CD4-positive, alpha-beta memory T cell (primary cell): ENCODE measurements at regions of chr2 and their contacts with region 1.

Region 1: DNA sequence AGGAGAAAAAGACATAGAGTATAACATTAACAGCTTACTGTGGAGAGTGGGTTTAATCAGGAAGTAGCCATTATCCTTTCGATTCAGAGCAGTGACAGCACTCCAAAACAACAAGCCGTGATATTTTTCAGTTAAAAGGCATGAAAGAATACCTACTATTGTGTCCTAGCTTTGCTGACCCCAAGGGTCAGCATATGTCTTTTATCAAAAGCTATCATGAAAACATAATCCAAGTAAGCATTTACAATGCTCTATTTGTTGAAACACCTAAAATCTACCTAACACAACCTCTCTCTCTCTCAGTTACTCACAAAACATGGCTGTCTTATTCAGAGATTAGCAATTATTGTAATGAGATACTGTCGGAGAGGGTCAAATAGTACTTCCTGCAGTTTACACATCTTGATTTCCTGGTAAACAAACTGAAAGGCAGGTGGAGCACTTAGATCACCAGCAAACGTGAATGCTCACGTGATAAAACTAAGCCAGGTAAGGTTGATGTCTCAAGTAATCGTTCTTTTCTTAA is 100.0 kb downstream of the BAZ2B start:
- DNase-seq: peak; percentile 64 to 80 (median 69)
- H3K4me3 ChIP-seq: peak overlapping the region; percentile 82 to 83
- H3K4me3 Mint-ChIP-seq: peak overlapping the region; percentile 71 to 89 (median 85)
- H3K27ac ChIP-seq: peak overlapping the region; percentile 58
- H3K27ac Mint-ChIP-seq: peak overlapping the region; percentile 48 to 95 (median 88)
- H3K4me1 ChIP-seq: peaks cover 33% of the 10 kb centered on the region
- H3K4me1 Mint-ChIP-seq: peaks cover 13 to 40% (median 23%) of the 10 kb centered on the region in 4 donors
- H3K27me3 ChIP-seq: no peaks in the 10 kb centered on the region
- H3K27me3 Mint-ChIP-seq: no peaks in the 10 kb centered on the region

Region 2: DNA sequence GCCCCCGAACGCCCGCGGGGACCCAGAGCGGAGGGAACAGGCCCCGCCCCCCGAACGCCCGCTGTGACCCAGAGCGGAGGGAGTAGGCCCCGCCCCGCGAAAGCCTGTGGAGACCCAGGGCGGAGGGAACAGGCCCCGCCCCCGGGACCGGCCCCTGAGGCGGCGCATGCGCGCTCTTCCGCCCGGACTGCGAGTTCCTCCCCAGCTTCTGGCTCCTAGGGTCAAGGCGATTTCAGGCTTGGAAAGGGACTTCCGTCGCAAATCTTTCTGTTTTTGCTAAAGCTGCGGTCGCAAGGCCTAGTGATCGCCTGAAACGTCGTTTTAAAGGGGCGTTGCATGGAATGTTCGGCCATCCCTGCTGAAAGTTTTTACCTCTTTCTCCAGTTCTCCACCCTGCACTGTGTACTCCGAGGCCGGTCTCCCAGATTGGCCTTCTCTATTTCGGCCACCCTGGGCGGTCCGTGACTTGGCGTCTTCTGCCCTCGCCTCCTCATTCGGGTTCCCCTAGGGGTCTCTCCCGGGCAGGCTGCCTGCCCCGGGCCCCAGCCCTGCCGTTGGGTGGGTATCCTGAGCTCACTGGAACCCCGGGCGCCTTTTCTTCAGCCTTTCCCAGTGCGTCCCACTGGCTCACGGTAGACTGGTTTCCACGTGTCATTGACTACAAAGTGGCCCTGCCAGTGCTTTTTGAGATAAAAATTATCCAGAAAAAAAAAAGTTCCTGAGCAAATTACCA is 229.4 kb before region 1 on chr2:
- CTCF ChIA-PET with region 1: no interaction called
- POLR2A ChIA-PET with region 1: no interaction called
- intact Hi-C with region 1: loop called (anchors 5 kb)
- DNase-seq: peak; percentile 94 to 95 (median 95)
- H3K4me3 ChIP-seq: peak overlapping the region; percentile 20 to 67
- H3K4me3 Mint-ChIP-seq: peak overlapping the region; percentile 85 to 92 (median 89)
- H3K27ac ChIP-seq: peak overlapping the region; percentile 64
- H3K27ac Mint-ChIP-seq: peak overlapping the region; percentile 61 to 93 (median 82)
- H3K4me1 ChIP-seq: peaks cover 13% of the 10 kb centered on the region
- H3K4me1 Mint-ChIP-seq: peaks cover 15 to 30% (median 23%) of the 10 kb centered on the region in 4 donors
- H3K27me3 ChIP-seq: no peaks in the 10 kb centered on the region
- H3K27me3 Mint-ChIP-seq: no peaks in the 10 kb centered on the region

Region 3: DNA sequence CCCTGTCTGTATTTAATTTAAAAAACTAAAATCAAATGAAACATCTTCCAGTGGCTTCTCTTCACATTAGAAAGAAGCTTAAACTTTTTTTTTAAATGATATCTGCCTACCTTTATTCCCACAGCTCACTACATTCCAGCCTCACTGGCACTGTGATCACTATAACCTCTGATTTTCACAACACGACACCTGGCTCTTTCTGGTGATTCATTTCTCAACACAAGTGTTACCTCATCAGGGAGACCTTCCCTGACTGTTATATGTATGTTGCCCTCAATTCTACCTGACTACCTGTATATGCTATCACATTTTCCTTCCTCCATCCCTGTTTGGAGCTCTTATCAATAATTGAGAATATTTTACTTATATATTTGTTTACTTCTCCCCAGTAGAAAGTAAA is 23.4 kb after region 1 on chr2:
- CTCF ChIA-PET with region 1: no interaction called
- POLR2A ChIA-PET with region 1: no interaction called
- intact Hi-C with region 1: no loop called
- DNase-seq: no peak
- H3K4me3 ChIP-seq: no peak overlapping the region
- H3K4me3 Mint-ChIP-seq: no peak overlapping the region
- H3K27ac ChIP-seq: no peak overlapping the region
- H3K27ac Mint-ChIP-seq: no peak overlapping the region
- H3K4me1 ChIP-seq: no peaks in the 10 kb centered on the region
- H3K4me1 Mint-ChIP-seq: no peaks in the 10 kb centered on the region
- H3K27me3 ChIP-seq: no peaks in the 10 kb centered on the region
- H3K27me3 Mint-ChIP-seq: no peaks in the 10 kb centered on the region

Region 4: DNA sequence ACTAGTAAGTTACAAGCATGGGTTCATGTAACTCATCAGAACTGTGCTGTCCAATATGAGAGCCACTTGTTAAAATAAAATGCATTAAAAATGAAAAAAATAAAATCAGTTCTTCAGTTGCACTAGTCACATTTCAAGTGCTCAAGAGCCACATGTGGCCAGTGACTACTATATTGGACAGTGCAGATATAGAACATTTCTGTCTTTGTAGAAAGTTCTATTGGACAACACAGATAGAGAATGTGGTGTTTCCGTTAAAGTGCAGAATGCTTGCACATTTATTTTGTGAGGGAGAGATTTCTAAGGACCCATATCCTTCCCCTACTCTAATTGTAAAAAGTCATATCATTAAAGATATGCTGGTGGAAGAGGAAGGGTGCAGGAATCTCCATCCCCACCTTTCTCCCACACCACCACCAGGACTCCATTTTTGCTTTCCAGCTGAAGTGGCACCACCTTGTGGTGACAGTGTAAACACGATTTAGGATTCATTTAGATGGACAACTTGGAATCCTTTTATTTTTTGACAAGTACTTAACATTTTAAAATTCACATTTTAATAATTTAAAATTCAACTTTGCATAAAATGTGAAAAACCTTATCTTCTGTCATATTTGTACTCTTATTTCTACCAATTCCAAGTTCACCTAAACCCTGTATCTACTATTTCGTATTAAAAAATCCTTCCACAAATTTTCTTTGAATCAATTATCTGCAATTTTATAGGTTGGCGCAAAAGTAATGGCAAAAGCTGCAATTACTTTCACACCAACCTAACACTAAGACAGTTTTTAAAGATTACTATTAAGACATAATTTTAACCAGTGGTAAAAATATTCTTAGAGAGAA is 291.1 kb after region 1 on chr2:
- CTCF ChIA-PET with region 1: interaction called, 3 read pairs
- POLR2A ChIA-PET with region 1: no interaction called
- intact Hi-C with region 1: loop called (anchors 10 kb)
- DNase-seq: no peak
- H3K4me3 ChIP-seq: no peak overlapping the region
- H3K4me3 Mint-ChIP-seq: no peak overlapping the region
- H3K27ac ChIP-seq: no peak overlapping the region
- H3K27ac Mint-ChIP-seq: peak overlapping the region in 1 of 7 donors; percentile 48
- H3K4me1 ChIP-seq: no peaks in the 10 kb centered on the region
- H3K4me1 Mint-ChIP-seq: no peaks in the 10 kb centered on the region
- H3K27me3 ChIP-seq: no peaks in the 10 kb centered on the region
- H3K27me3 Mint-ChIP-seq: no peaks in the 10 kb centered on the region

Region 5: DNA sequence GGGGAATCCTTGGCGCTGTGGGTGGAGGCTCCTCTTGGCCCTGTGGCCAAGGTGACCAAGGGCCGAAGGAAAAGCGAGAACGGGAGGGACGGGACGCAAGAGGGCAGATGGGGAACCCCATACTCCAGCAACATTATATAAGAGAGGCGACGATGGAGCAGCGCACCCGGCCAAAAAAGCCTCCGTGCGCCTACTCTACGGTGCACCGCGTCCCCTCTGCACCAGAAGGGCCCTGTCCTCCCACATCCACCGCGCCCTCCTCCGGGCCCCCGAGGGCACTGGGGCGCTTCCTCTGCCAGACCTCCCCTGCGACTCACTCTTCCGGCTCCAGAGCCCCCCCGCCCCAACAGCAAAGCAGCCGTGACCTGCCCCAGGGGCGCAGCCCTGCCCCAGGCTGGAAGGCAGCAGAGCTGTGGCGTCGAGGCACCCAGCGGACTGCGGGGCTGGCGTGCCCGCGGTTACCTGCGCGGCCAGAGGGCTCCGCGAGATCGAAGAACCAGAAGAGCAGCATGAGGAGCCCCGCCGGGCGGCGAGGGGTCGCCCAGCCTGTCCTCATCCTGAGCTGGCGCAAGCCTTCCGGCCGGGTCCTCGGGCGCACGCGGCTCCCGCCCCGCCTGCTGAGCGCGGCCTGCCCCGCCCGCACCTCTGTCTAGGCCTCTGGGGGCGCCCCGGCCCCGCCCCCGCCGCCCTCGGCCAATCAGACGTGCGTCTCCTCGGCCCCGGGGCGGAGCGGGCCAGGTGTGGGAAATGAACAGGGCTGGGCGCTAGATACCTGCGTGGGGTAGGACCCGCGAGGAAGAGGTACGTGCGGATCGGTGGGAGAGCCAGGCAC is 388.0 kb after region 1 on chr2:
- CTCF ChIA-PET with region 1: no interaction called
- POLR2A ChIA-PET with region 1: interaction called, 4 read pairs
- intact Hi-C with region 1: loop called (anchors 5 kb)
- DNase-seq: peak; percentile 79 to 85 (median 82)
- H3K4me3 ChIP-seq: peak within 1 kb of the TSS; percentile 92 to 97
- H3K4me3 Mint-ChIP-seq: peak within 1 kb of the TSS; percentile 98 to 100 (median 99)
- H3K27ac ChIP-seq: peak within 1 kb of the TSS; percentile 82
- H3K27ac Mint-ChIP-seq: peak within 1 kb of the TSS; percentile 97 to 100 (median 98)
- H3K4me1 ChIP-seq: peaks cover 21% of the 10 kb centered on the region
- H3K4me1 Mint-ChIP-seq: peaks cover 18 to 43% (median 30%) of the 10 kb centered on the region in 4 donors
- H3K27me3 ChIP-seq: no peaks in the 10 kb centered on the region
- H3K27me3 Mint-ChIP-seq: no peaks in the 10 kb centered on the region